AG04449 (cell line): ENCODE measurements at regions of chr3 and their contacts with region 1.

Region 1: GRCh38 chr3:138417559-138417982 is 16.8 kb upstream of the ESYT3 start:
- DNase-seq: no peak
- H3K4me3 ChIP-seq: no peak overlapping the region
- CTCF ChIP-seq: peak; percentile 96

Region 2: DNA sequence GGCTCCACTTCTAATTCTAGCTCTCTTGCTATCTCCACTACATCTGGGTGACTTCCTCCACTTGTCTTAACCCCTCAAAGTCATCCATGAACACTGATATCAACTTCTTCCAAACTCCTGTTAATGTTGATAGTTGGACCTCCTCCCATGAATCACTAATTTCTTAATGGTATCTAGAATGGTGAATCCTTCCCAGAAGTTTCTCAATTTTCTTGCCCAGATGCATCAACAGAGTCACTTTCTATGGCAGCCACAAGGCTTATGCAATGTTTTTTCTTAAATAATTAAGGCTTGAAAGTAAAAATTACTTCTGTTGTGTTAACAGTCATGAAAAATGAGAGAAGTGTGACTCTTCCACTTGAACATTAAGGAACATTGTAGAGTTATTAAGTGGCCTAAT is 2003.1 kb before region 1 on chr3:
- CTCF ChIA-PET with region 1: no interaction called
- POLR2A ChIA-PET with region 1: no interaction called
- DNase-seq: no peak
- H3K4me3 ChIP-seq: no peak overlapping the region
- CTCF ChIP-seq: no peak

Region 3: DNA sequence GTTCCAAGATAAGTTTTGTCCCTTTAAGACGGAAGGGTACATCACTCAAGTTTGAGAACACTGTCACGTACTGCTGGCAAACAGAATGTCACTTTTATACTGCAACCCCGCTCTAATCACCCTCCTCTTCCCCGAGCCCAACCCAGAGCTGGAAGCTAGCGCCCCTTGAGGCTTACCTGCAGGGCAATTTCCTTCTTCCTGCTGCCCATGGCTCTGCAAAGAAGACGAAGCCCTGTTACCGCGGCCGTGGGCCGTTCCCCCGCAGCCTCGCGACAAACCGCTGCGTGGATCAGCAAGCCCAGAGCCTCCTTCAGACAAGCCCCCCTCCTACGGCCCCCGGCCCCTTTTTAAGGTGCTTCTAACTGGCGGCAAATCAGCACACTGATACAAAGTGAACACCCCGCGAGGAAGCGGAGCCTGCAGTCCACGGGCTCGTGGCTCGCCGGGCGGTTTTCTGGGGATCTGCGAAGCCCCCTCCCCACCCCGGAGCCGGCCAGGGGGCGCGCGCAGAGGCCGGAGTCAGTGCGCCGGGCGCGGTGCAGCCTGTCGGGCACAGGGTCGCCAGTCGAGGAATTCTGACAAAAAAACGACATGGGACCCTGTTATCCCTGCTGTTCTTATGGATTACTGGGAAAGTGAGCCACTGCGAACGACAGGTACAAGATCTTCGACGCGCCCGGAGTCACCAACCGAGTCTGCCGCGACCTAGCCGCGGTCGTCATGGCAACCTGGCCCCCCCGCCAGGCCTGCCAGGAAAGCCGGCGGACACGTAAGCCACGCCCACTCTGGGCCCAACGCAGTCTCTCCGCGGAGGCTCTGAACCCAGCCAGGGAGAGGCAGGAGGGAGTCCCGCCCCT is 88.2 kb before region 1 on chr3 and contains the start of gene NME9:
- CTCF ChIA-PET with region 1: interaction called, 23 read pairs
- POLR2A ChIA-PET with region 1: no interaction called
- DNase-seq: no peak
- H3K4me3 ChIP-seq: peak within 1 kb of the TSS; percentile 62
- CTCF ChIP-seq: peak; percentile 74

Region 4: GRCh38 chr3:138347960-138348753 is 69.4 kb before region 1 on chr3 and contains the start of gene MRAS:
- CTCF ChIA-PET with region 1: interaction called, 20 read pairs
- POLR2A ChIA-PET with region 1: no interaction called
- DNase-seq: no peak
- H3K4me3 ChIP-seq: peak within 1 kb of the TSS; percentile 74
- CTCF ChIP-seq: peak; percentile 41

Region 5: DNA sequence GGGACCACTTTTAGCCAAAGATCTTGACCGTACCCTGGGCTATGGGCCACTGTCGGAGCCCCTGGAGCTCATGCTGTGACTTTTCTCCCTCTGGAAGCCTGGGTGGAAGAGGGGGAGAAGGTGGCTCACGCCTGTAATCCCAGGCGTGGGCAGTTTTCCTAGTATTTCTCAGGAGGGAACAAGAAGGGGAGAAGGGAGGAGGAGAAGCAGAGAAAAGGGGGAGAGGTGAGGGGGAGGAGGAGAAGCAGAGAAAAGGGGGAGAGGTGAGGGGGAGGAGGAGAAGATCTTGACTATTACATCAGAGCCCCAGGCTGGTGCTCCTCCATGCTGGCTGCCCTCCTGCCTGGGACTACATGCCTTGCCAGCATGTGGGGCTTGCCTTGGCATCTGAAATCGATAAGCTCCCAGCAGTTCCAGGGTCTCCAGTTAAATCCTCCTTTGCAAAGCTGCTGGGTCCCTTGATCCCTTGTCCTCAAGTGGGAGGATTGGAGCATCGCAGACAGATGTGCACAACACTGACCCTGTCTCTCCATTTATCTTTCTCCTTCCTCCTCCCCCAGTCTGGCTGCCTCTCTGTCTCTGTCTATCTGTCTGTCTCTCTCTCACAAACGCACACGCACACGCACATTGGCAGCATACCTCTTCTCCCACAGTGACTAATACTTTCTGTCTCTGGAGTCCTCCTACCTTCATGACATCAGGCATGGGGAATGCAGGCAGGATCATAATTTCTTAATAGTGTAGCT is 27.6 kb before region 1 on chr3:
- CTCF ChIA-PET with region 1: interaction called, 18 read pairs
- POLR2A ChIA-PET with region 1: no interaction called
- DNase-seq: peak; percentile 81
- H3K4me3 ChIP-seq: no peak overlapping the region; the same call in none of the 2 replicates
- CTCF ChIP-seq: no peak

Region 6: DNA sequence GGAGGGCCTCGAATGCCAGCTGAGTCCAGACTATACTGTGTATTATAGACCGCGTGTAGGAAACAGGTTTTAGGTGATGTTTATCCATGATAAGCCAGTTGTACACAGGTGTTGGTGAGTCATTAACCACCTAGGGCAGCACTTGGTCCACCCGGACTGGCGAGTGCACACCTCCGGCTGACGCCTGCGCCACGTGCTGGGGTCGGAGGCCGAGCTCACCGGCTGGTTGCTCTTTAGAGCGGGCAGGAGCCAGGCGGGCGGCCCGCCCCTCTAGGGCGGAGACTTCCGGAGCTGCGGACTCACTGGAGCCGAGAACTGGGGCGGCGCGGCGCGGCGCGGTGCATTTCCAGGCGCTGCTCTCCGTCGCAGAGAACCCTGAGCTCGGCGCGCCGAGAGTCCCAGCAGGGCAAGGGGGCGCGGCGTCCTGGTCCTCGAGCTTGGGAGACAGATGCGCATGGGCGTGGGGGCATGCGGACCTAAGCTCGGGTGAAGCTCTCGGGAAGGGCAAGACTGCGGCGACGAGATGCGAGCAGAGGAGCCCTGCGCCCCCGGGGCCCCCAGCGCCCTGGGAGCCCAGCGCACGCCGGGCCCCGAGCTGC is 16.8 kb after region 1 on chr3 and contains the start of gene ESYT3:
- CTCF ChIA-PET with region 1: interaction called, 90 read pairs
- POLR2A ChIA-PET with region 1: no interaction called
- DNase-seq: no peak
- H3K4me3 ChIP-seq: peak within 1 kb of the TSS; percentile 53
- CTCF ChIP-seq: no peak

Region 7: DNA sequence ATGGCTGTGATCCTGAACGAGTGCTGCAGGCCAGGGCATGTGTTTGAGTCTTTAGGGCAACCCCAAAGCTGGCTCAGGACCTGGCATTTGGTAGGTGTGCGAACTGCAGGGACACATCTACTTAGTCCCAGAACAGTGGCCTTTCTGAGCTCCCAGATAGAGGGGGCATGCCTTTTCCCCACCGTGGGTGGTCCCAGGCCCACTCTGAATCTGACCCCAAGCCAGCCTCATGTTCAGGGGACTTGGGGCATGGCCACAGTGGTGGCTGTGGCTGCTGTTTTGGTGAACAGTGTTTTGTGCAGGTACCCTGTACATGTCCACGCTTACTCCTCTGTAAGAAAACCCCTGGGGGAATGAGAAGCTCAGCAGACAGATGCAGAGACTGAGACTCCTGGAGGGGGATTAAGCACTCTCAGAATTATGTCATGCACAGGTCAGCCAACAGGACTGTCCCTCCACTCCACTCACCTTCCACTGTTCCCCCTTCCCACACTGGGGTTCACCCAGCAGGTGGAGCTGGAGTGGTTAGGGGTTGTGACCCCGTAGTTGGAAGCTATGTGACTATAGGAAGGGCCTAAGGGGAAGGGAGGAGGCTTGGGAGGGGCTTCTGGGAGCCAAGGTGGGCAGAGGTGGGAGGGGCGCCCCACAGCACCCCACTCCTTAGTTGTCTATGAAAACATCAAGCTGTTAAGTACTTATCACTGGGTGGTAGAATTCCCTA is 33.3 kb after region 1 on chr3:
- CTCF ChIA-PET with region 1: interaction called, 64 read pairs
- POLR2A ChIA-PET with region 1: no interaction called
- DNase-seq: no peak
- H3K4me3 ChIP-seq: no peak overlapping the region
- CTCF ChIP-seq: no peak

Region 8: GRCh38 chr3:138594150-138594934 is 176.8 kb after region 1 on chr3 and contains the start of gene CEP70:
- CTCF ChIA-PET with region 1: interaction called, 12 read pairs
- POLR2A ChIA-PET with region 1: no interaction called
- DNase-seq: peak; percentile 65
- H3K4me3 ChIP-seq: peak within 1 kb of the TSS; percentile 84
- CTCF ChIP-seq: peak; percentile 68